Motor neuron (in vitro differentiated cells): ENCODE measurements at regions of chr7 and their contacts with region 1.

Region 1: DNA sequence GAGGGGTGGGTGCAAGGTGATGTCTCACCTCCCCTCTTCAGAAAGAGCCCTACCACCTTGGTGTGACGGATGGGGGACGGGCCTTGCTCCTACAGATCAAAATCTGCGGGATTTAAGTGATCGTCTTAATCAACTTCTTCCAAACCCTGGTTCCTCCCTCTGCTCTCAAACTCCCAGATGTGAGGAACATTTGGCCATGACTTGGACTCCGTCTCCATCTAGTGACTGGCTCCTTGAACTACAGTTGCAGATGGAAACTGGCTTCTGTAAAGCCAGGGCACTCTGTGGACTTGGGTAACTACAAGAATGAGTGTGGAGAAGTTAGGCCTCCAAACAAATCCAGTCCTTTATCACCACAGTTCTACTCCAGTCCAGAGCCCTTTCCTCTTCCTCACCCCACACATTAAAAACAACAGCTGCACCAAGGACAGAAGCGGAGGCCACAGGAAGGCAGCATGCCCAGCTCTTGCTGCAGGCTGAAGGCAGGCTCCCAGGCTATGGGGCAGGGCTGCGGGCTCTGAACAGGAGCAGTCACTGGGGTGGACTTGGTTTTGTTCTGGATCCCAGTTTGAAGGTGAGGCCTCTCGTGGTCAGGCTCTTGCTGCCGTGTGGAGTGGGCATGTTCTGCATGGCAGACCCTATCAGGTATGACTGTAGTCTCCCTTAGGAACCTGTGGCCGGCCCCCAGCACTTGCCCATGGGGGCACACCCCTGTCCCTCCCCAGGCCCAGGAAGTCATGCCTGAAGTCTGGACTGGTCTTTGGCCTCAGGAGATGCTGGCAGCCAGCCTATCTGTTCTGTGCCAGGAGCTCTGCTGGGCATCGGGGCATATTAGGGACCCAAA is 79.4 kb downstream of the VWC2 start:
- ATAC-seq: peak; percentile 68 to 95 (median 83)
- H3K4me3 ChIP-seq: no peak overlapping the region
- H3K27ac ChIP-seq: no peak overlapping the region
- H3K4me1 ChIP-seq: no peaks in the 10 kb centered on the region

Region 2: DNA sequence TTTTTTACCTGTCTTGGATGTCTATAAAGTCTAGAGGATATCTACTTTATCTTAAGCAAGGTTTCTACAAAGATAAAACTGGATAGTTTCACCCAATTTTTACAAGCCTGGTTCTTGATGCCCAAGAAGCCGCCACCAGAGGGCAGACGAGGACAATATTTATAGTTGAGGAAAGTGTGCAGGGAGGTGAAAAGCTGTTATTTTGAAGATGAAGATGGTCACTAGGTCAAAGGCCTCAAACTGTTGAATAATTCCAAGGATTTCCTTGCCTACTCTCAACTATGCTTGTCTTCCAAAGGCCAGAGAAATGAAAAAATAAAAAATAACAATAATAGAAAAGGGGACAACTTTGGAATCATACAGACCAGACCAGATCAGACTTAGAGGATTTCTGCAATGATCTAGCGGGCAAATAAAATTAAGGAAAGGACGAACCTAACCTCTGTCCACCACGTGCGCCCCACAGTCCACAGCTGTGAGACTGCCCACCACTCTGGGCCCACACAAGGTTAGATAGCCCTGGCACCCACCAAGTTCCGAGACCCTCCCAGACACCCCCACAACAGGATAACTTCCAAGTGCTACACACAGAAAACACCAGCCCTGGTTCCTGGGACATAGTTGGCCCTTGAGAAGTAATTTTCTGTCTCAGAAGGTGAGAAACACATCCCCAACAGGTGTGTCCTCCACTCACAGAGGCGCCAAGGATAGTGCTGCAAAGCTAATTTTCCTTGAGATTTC is 1907.4 kb before region 1 on chr7:
- in situ Hi-C with region 1: loop called in 1 of 9 experiments (anchors 25 kb)
- ATAC-seq: peak in 7 of 8 experiments; percentile 14 to 85 (median 59)
- H3K4me3 ChIP-seq: no peak overlapping the region
- H3K27ac ChIP-seq: no peak overlapping the region
- H3K4me1 ChIP-seq: peaks cover 1 to 4% of the 10 kb centered on the region in 2 donors

Region 3: DNA sequence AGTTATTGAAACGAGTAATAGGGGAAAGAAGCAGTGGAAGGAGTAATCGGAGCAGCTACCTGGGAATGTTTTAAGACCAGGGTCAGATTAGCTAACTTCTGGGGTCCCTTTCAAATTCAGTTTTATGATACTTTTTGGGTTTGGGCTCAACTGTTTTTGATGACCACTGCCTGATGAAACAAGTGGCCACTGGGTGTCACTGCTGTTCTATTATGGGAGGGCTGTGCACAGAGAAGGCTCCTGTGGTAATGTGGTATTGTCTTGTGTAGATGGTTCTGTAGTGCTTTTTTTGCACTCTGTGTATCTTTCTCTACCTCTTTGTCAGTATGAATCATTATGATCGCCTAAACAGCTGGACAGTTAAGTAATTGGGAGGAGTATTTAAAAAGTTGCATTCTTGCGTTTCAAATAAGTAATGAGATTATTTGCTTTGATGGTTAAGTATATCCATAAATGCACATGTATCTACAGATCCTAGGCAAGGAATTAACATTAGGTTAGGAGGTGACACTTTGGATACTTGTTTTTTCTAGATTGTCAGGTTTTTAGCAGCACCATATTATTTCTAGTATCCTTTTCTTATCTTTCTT is 1553.2 kb before region 1 on chr7:
- in situ Hi-C with region 1: loop called in 2 of 9 experiments (anchors 10 to 25 kb)
- ATAC-seq: peak; percentile 87 to 99 (median 90)
- H3K4me3 ChIP-seq: no peak overlapping the region
- H3K27ac ChIP-seq: no peak overlapping the region
- H3K4me1 ChIP-seq: peaks cover 0 to 13% of the 10 kb centered on the region in 2 donors

Region 4: DNA sequence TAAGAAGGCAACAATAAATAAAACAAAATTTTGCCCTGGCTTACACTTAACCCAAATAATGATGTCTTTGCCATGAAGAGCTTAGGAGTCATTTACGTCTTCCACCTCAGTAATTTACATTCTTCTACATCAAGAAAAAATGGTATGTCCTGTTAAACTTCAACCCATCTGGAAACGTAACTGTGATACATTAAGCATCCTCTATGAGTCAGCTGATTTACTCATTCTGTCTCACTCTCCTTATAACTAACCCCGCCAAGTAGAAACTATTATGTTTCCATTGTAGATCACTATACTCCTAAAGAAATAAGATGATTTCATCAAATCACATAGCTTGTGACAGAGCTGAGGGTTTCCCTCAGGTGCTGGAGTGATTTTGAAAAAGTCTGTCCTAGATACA is 597.8 kb before region 1 on chr7:
- in situ Hi-C with region 1: no loop called
- ATAC-seq: peak in 6 of 8 experiments; percentile 49 to 85 (median 66)
- H3K4me3 ChIP-seq: no peak overlapping the region
- H3K27ac ChIP-seq: no peak overlapping the region
- H3K4me1 ChIP-seq: peaks cover 0 to 3% of the 10 kb centered on the region in 2 donors

Region 5: GRCh38 chr7:50431316-50431715 is 578.5 kb after region 1 on chr7:
- in situ Hi-C with region 1: no loop called
- ATAC-seq: peak in 2 of 8 experiments; percentile 29 to 47
- H3K4me3 ChIP-seq: no peak overlapping the region
- H3K27ac ChIP-seq: no peak overlapping the region
- H3K4me1 ChIP-seq: no peaks in the 10 kb centered on the region